Activated CD8-positive, alpha-beta T cell treated with anti-CD3 and anti-CD28 coated beads, Interleukin-2, amount 10 ng/mL, durations not matched to agents 7 days and 5 days (primary cell): ENCODE measurements at regions of chr1 and their contacts with region 1.

Region 1: DNA sequence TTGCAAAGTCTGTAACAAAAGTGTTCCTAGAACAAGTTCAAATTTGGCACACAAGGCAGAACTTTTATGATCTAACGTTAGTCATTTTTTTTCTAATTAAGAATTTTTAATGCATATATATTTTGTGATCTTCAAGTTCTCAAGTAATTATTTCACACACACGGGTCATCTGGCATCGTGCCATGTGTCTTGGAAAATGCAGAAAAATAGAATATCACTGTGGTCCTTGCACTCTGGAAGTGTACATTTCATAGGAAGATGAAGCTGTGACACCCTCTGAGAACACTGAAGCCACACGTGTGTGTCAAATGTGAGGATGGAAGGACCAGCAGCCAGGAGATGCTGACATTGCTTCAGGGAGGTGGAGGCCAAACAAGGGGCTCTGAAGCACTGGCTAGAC is 411.7 kb downstream of the CAMTA1 start:
- DNase-seq: no peak
- ATAC-seq: no peak
- H3K4me3 Mint-ChIP-seq: no peak overlapping the region
- H3K27ac Mint-ChIP-seq: no peak overlapping the region
- H3K4me1 Mint-ChIP-seq: no peaks in the 10 kb centered on the region
- H3K27me3 Mint-ChIP-seq: peaks cover 2% of the 10 kb centered on the region

Region 2: DNA sequence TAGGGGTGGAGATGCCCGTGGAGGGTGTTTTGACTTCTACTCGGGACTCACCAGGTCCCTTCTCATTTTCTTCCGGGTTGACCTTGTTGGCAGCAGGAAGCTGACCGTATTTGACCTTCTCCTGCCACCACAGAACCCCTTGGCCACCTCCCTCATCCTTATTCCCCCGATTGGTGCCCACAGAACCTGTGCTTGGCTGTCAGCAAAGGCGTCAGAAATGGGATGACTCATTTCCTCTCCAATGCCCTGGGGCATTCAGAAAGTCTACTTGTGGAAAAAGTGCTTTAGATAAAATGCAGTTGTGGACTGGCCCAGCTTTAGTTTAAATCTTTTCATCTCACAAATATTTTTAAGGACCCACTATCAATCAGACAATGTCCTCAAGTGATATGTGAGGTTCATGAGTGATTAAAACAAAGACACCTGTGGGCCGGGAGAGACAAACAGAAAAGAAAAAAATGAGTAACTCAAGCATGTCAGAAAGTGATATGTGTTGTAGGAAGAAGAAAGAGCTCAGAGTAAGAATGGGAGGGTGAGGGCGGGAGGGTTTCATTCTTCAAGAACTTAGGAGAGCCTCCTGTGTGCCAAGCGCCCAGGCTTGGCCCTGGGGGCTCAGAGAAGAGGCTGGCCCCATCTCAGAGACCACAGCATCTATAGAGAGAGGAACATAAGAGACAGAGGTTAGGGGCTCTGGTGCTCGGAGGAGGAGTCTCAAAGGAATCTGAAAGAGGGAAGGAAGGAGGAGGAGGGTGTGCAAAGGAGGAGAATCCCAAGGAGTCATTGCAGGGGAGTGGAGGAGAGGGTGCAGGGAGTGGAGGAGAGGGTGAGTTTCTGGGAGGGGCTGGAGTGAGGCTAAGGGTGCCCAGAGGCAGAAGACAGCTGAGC is 352.6 kb after region 1 on chr1:
- CTCF ChIA-PET with region 1: no interaction called
- POLR2A ChIA-PET with region 1: no interaction called
- DNase-seq: peak; percentile 55
- ATAC-seq: peak; percentile 74
- H3K4me3 Mint-ChIP-seq: no peak overlapping the region
- H3K27ac Mint-ChIP-seq: peak overlapping the region; percentile 80
- H3K4me1 Mint-ChIP-seq: peaks cover 11% of the 10 kb centered on the region
- H3K27me3 Mint-ChIP-seq: peaks cover 10% of the 10 kb centered on the region

Region 3: DNA sequence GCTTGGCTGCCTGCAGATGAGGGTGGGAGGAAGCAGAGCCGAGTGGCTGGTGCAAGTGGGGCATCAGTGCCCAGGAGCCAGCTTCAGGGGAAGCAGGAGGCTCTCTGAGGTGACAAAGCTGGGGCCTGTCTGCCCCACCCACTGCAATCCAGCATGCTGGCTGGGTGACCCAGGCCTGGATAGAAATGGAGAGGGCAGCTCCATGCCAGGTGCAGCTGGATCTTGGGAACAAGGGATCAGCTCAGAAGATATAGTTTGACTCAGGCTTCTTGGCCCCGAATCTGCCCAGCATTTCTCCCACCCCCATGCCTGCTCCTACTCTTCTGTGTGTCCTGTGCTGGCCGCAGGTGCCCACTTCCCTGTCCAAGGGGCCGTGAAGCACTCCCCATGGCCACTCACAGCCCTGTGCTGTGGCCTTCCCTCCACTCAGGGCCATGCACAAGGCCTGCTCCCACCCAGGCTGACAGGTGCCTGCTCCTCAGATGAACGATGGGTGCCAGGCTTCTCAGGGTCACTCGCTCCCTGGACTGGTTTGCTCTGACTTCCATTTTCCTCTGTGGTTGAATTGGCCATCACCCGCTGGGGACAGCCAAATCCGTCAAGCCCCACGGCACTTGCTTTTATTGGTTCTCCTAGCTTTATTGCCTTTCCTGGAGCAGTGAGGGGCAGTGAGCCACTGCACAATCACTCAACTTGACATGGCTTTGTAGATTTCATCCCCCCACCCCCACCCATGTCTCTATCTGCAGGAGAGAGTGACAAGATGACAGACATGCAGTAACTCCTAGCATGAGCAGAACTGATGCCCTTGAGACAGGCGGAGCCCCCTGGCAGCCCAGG is 399.4 kb after region 1 on chr1:
- CTCF ChIA-PET with region 1: no interaction called
- POLR2A ChIA-PET with region 1: interaction called, 10 read pairs
- DNase-seq: no peak
- ATAC-seq: no peak
- H3K4me3 Mint-ChIP-seq: no peak overlapping the region
- H3K27ac Mint-ChIP-seq: no peak overlapping the region
- H3K4me1 Mint-ChIP-seq: no peaks in the 10 kb centered on the region
- H3K27me3 Mint-ChIP-seq: peaks cover 2% of the 10 kb centered on the region